Naive thymus-derived CD8-positive, alpha-beta T cell (primary cell): ENCODE measurements at regions of chr6 and their contacts with region 1.

Region 1: GRCh38 chr6:90413867-90414266 is 117.2 kb upstream of the BACH2 start:
- DNase-seq: peak; percentile 36 to 90 (median 71)
- ATAC-seq: peak; percentile 97 to 99
- H3K4me3 Mint-ChIP-seq: peak overlapping the region; percentile 64 to 90 (median 76)
- H3K27ac Mint-ChIP-seq: peak overlapping the region; percentile 76 to 98 (median 86)
- H3K4me1 Mint-ChIP-seq: peaks cover 13 to 31% (median 25%) of the 10 kb centered on the region in 4 donors
- H3K27me3 Mint-ChIP-seq: peaks cover 0 to 4% (median 0%) of the 10 kb centered on the region in 5 donors

Region 2: DNA sequence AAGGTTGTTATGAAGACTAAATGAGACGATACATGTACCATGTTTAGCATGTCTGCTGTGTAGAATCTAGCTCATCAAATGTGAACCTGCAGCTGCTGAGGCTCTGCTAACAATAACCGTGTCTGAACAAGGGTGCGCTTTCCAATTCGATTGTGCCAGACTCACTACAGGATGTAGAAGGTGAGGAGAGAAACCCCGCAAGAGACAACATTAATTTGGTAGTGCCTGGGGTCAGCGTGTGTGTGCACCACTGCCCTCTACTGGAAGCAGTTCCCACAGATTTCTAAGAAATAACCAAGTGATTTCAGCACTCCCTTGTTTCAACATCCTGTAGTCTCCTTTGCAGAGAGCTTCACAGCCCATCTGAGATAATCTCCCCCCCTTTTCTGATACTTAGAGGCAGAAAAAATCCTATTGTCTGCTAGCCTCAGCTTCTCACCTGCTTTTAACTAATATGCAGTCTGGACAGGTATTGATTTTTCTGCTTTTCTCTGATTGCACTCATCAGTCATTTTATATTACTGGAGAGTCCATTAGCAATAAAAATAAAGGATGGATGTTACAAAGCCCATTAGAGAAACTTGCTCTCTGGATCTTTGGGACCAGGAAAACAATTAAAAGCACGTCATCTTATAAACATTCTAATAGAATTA is 20.5 kb before region 1 on chr6:
- POLR2A ChIA-PET with region 1: interaction called, 18 read pairs
- DNase-seq: peak; percentile 42 to 85 (median 78)
- ATAC-seq: peak; percentile 66 to 81
- H3K4me3 Mint-ChIP-seq: peak overlapping the region in 5 of 10 donors; percentile 6 to 62 (median 49)
- H3K27ac Mint-ChIP-seq: peak overlapping the region in 9 of 10 donors; percentile 13 to 68 (median 58)
- H3K4me1 Mint-ChIP-seq: peaks cover 20 to 41% (median 29%) of the 10 kb centered on the region in 4 donors
- H3K27me3 Mint-ChIP-seq: no peaks in the 10 kb centered on the region

Region 3: DNA sequence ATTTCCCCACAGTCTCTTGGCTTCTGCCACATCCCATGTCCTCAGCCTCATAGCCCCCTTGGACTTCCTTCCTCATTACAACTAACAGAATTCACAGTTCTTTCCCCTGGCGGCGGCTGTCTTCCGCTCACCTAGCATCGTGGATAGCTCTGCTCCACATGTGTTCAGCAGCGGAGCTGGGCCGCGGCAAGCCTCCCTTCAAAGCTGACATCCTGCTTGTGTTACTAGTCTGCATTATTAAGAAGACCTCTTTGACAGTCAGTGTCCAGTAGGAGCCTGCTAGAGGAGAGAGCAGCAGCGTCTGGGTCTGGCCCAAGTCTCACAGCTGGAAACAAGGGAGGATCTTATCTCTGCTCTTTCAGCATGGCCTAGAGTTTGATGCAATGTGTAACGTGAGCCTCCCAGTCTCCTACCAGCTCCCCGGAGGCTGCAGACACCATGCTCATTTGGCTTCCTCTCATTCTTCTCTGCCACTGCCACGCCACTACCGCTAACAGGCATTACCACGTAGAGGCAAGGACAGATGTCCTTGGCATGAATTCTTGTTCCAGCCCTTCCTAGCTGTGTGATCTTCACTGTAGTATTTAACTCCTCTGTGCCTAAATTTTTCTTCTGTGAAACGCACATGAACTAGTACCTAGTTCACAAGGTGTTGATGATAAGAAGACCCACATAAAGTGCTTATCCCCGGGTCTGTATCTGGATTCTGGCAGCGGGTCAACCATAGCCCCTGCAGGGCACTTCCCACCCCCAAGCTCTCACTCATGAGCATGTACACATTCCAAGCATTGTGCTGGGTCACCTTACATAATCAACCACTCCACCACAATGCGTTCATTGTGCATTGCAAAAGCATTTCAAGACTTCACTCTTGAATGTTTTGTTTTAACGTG is 10.1 kb before region 1 on chr6:
- POLR2A ChIA-PET with region 1: interaction called, 37 read pairs
- DNase-seq: no peak
- ATAC-seq: no peak
- H3K4me3 Mint-ChIP-seq: peak overlapping the region in 4 of 10 donors; percentile 24 to 61 (median 56)
- H3K27ac Mint-ChIP-seq: peak overlapping the region; percentile 37 to 88 (median 79)
- H3K4me1 Mint-ChIP-seq: peaks cover 20 to 59% (median 40%) of the 10 kb centered on the region in 4 donors
- H3K27me3 Mint-ChIP-seq: no peaks in the 10 kb centered on the region

Region 4: GRCh38 chr6:90425161-90425641 is 11.3 kb after region 1 on chr6:
- POLR2A ChIA-PET with region 1: interaction called, 20 read pairs
- DNase-seq: peak in 3 of 10 donors; percentile 40 to 45 (median 44)
- ATAC-seq: peak; percentile 88 to 94
- H3K4me3 Mint-ChIP-seq: peak overlapping the region; percentile 58 to 85 (median 76)
- H3K27ac Mint-ChIP-seq: peak overlapping the region; percentile 82 to 95 (median 89)
- H3K4me1 Mint-ChIP-seq: peaks cover 11 to 21% (median 16%) of the 10 kb centered on the region in 4 donors
- H3K27me3 Mint-ChIP-seq: no peaks in the 10 kb centered on the region

Region 5: DNA sequence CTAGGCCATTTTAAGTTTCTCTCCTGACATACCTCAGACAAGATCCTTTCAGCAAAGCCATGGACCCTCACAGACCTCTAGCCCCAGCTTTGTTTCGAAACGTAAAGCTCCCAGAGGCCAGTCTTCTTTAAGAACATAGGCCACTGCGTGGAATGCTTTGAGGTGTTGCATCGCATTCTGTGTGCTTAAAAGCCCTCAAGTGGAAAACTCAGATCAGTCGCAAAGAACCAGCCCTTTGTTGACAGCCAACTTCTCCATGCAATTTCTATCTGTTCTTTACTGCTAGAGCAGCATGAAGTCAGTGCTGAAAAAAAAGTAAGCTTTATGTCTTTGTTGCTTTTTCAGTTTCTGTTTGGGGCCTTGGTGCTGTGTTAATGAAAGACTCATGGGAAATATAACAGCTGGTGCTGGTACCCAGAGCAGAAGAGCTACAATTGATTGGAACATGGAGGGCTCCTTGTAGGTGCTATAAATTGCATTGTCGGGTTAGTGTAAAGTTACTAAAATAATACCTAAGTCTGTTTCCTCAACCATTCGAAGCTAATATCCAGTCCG is 30.4 kb after region 1 on chr6:
- POLR2A ChIA-PET with region 1: no interaction called
- DNase-seq: no peak
- ATAC-seq: no peak
- H3K4me3 Mint-ChIP-seq: no peak overlapping the region
- H3K27ac Mint-ChIP-seq: no peak overlapping the region
- H3K4me1 Mint-ChIP-seq: peaks cover 6 to 16% (median 7%) of the 10 kb centered on the region in 4 donors
- H3K27me3 Mint-ChIP-seq: peaks cover 0 to 2% (median 0%) of the 10 kb centered on the region in 5 donors